Activated naive CD4-positive, alpha-beta T cell treated with anti-CD3 and anti-CD28 coated beads for 36 hours (primary cell): ENCODE measurements at regions of chr7 and their contacts with region 1.

Region 1: DNA sequence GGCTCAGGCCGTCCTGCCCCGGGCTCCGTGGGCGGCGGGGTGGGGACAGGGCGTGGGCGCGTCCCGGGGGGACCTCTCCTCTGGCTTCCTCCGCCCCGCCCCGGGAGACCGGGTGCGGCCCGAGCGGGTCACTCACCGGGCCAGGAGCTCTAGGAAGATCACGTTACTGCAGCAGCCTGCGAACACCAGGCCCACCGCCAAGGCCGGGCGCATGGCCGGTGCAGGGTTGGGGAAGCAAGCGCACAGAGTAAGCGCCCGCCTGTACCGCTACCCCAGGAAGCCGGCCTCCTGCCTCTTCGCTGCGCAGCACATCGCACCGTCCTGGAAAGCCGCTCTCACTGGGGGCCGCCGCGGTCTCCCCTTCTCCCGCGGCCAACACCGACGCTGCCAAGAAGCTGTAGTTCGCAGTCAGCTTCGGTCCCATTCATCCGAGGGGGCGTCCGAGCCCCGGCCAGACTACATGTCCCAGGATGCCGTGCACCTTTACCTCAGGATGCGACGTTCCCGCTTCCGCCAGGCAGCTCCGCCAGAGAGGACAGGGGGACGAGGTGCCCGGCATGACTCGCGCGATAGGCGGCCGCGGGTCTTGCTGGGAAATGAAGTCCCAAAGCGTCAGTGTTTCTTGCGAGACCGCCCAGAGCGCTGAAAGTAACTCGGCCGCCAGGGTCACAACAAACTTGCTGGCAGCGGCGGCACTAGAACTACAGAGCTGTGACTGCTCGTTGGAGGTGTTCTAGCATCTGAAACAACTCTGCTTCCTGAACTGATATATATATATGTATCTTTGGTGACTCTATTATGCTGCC is at the start of gene SLC35B4:
- DNase-seq: peak; percentile 97
- H3K4me3 Mint-ChIP-seq: peak within 1 kb of the TSS; percentile 92
- H3K27ac Mint-ChIP-seq: peak within 1 kb of the TSS; percentile 77
- H3K4me1 Mint-ChIP-seq: peaks cover 16% of the 10 kb centered on the region
- H3K27me3 Mint-ChIP-seq: no peaks in the 10 kb centered on the region
- total RNA-seq, gene SLC35B4: 7.9 to 10.3 TPM

Region 2: DNA sequence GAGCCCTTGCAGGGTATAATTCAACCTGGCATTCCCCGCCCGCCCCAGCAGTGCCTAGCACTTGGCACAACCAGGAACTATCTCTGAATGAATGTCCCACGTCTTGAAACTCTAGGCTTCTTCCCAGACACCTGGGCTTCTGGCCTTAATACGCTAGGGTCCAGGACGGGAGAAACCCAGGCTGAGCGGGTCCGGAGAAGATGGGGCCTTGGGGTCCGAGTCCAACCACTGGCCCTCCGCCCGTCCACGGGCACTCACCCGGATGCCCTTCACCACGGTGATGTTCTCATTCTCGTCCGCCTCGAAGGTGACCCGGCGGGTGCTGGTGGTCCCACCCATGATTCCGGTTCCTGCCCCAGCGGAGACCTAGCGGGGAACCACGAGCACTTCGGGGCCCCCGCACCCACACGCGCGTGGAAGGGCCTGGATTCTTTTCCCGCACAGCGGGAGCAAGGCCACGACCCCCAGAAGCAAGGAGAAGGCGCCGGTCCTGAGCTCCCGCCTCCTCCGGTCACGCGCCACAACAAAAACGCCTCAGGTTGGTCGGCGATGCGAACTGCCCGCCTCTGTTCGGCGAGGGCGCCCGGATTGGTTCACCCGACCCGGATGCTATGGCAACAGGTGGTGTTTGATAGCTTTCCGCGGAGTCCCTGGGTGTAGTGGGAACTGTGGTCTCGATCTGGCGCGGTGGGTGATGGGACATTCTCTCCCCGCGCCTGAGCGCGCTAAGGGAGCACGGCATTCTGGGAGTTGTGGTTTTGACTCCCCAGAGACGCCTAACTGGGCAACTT is 1234.9 kb before region 1 on chr7 and contains the start of gene CHCHD3:
- CTCF ChIA-PET with region 1: no interaction called
- intact Hi-C with region 1: loop called (anchors 1 kb)
- DNase-seq: peak; percentile 99
- H3K4me3 Mint-ChIP-seq: peak within 1 kb of the TSS; percentile 78
- H3K27ac Mint-ChIP-seq: peak within 1 kb of the TSS; percentile 78
- H3K4me1 Mint-ChIP-seq: peaks cover 27% of the 10 kb centered on the region
- H3K27me3 Mint-ChIP-seq: no peaks in the 10 kb centered on the region
- total RNA-seq, gene CHCHD3: 62.0 to 65.0 TPM

Region 3: DNA sequence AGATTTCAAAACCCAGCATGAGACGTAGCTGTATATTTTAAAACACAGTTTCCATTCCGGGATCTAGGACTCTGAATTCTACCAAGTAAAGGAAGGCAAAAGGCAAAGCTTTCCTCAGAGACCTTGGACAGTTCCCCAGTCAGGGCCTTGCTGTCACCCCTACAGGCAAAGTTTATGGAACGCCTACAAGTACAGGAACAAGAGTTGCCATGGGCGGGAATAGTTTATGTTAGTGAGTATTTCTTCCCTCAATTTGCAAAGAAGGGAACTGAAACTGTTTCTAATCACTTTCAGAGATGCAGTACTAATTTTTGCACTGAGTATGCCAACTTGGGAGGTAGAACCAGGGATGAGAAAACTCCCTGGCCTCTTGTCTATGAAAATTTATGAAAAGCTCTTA is 257.8 kb before region 1 on chr7:
- CTCF ChIA-PET with region 1: no interaction called
- intact Hi-C with region 1: no loop called
- DNase-seq: no peak
- H3K4me3 Mint-ChIP-seq: no peak overlapping the region
- H3K27ac Mint-ChIP-seq: no peak overlapping the region
- H3K4me1 Mint-ChIP-seq: no peaks in the 10 kb centered on the region
- H3K27me3 Mint-ChIP-seq: no peaks in the 10 kb centered on the region

Region 4: GRCh38 chr7:134126966-134127848 is 189.5 kb before region 1 on chr7 and contains the start of gene LRGUK:
- CTCF ChIA-PET with region 1: no interaction called
- intact Hi-C with region 1: loop called (anchors 1 kb)
- DNase-seq: peak; percentile 86
- H3K4me3 Mint-ChIP-seq: peak within 1 kb of the TSS; percentile 84
- H3K27ac Mint-ChIP-seq: peak within 1 kb of the TSS; percentile 16
- H3K4me1 Mint-ChIP-seq: peaks cover 12% of the 10 kb centered on the region
- H3K27me3 Mint-ChIP-seq: peaks cover 15% of the 10 kb centered on the region
- total RNA-seq, gene LRGUK: 0.07 to 0.14 TPM

Region 5: GRCh38 chr7:134298902-134299683 is 17.6 kb before region 1 on chr7:
- CTCF ChIA-PET with region 1: no interaction called
- intact Hi-C with region 1: no loop called
- DNase-seq: no peak
- H3K4me3 Mint-ChIP-seq: no peak overlapping the region
- H3K27ac Mint-ChIP-seq: no peak overlapping the region
- H3K4me1 Mint-ChIP-seq: no peaks in the 10 kb centered on the region
- H3K27me3 Mint-ChIP-seq: no peaks in the 10 kb centered on the region

Region 6: DNA sequence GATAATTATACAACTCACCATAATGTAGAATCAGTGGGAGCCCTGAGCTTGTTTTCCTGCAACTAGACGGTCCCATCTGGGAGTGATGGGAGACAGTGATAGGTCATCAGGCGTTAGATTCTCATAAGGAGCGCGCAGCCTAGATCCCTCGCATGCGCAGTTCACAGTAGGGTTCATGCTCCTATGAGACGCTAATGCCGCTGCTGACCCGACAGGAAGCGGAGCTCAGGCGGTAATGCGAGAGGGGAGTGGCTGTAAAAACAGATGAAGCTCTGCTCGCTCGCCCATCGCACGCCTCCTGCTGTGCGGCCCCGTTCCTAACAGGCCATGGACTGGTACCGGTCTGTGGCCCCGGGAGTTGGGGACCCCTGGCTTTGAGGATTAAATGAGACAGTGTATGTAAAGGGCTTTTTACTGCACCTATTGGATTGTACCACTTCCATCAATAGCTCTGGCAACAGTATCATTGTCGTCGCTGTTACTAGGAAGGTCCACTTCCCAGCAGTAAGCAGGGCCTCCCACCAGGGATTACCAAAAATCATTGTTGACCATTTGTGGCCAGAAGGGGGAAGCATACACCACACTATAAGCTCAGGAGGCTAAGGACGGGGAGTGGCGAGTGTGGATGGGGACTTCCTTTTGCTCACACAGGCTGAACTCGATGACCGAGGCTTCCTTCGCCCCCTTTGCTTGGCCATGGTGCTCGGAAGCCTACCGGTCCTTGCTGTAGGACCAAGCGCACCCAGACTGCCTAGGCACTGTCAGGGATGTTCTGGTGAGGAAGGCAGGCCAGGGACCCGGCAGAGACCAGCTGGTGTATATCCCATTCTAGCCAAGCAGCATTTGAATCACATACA is 115.8 kb after region 1 on chr7:
- CTCF ChIA-PET with region 1: no interaction called
- intact Hi-C with region 1: loop called (anchors 2 kb)
- DNase-seq: peak; percentile 82
- H3K4me3 Mint-ChIP-seq: peak overlapping the region; percentile 72
- H3K27ac Mint-ChIP-seq: peak overlapping the region; percentile 79
- H3K4me1 Mint-ChIP-seq: peaks cover 7% of the 10 kb centered on the region
- H3K27me3 Mint-ChIP-seq: no peaks in the 10 kb centered on the region

Region 7: GRCh38 chr7:134491963-134492362 is 175.2 kb after region 1 on chr7:
- CTCF ChIA-PET with region 1: no interaction called
- intact Hi-C with region 1: no loop called
- DNase-seq: no peak
- H3K4me3 Mint-ChIP-seq: no peak overlapping the region
- H3K27ac Mint-ChIP-seq: no peak overlapping the region
- H3K4me1 Mint-ChIP-seq: no peaks in the 10 kb centered on the region
- H3K27me3 Mint-ChIP-seq: peaks cover 2% of the 10 kb centered on the region

Region 8: GRCh38 chr7:134865001-134865845 is 548.5 kb after region 1 on chr7:
- CTCF ChIA-PET with region 1: no interaction called
- intact Hi-C with region 1: loop called (anchors 5 kb)
- DNase-seq: peak; percentile 62
- H3K4me3 Mint-ChIP-seq: peak overlapping the region; percentile 65
- H3K27ac Mint-ChIP-seq: peak overlapping the region; percentile 77
- H3K4me1 Mint-ChIP-seq: peaks cover 39% of the 10 kb centered on the region
- H3K27me3 Mint-ChIP-seq: no peaks in the 10 kb centered on the region

Region 9: DNA sequence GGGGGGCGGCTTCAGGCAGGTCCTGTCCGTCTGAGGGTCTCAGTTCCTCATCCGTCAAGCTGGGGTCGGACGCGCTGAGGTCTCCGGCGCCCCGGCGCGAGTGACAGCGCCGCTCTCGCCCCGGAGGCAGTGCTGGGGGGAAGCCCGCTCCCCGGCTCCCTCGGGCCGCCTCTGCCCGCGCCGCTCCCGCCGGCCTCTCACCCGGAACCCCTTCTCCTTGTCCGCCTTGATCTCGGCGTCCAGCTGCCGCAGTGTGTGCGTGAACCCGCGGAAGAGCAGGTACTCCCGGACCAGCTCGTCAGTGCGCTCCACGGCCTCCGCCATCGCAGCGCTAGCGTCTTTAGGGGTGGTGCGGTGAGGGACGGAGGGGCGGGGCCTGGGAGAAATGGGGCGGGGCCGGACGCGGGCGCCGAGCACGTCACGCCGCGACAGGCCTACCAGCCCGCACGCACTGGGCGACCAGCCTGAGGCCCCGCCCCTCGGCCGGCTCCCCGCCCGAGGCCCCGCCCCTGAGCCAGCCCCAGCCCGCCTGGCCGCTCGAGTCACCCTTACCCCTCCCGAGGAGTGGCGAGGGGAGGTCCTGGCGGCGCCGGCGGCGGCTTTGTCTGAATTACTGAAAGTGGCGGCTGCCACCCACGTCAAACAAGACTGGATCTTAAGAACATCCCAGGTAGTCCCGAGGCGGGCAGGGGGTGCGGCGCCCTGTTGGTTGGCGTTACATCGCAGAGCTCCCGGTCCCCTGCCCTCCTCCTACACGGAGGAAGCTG is 894.6 kb after region 1 on chr7 and contains the start of gene WDR91:
- CTCF ChIA-PET with region 1: no interaction called
- intact Hi-C with region 1: loop called (anchors 5 kb)
- DNase-seq: peak; percentile 96
- H3K4me3 Mint-ChIP-seq: peak within 1 kb of the TSS; percentile 98
- H3K27ac Mint-ChIP-seq: peak within 1 kb of the TSS; percentile 85
- H3K4me1 Mint-ChIP-seq: peaks cover 41% of the 10 kb centered on the region
- H3K27me3 Mint-ChIP-seq: no peaks in the 10 kb centered on the region
- total RNA-seq, gene WDR91: 10.6 to 11.1 TPM